Vagina (tissue), 2 donors: ENCODE measurements at regions of chr7 and their contacts with region 1.

Region 1: GRCh38 chr7:69739931-69740431 is 141.7 kb downstream of the AUTS2 start:
- DNase-seq: no peak
- H3K4me3 ChIP-seq: no peak overlapping the region
- H3K27ac ChIP-seq: no peak overlapping the region
- H3K4me1 ChIP-seq: peaks cover 9% of the 10 kb centered on the region
- H3K27me3 ChIP-seq: no peaks in the 10 kb centered on the region
- CTCF ChIP-seq: no peak
- POLR2A ChIP-seq: no peak

Region 2: GRCh38 chr7:68873616-68874015 is 866.4 kb before region 1 on chr7:
- intact Hi-C with region 1: loop called (anchors 10 kb)
- DNase-seq: no peak
- H3K4me3 ChIP-seq: no peak overlapping the region
- H3K27ac ChIP-seq: no peak overlapping the region
- H3K4me1 ChIP-seq: no peaks in the 10 kb centered on the region
- H3K27me3 ChIP-seq: no peaks in the 10 kb centered on the region
- CTCF ChIP-seq: no peak
- POLR2A ChIP-seq: no peak

Region 3: DNA sequence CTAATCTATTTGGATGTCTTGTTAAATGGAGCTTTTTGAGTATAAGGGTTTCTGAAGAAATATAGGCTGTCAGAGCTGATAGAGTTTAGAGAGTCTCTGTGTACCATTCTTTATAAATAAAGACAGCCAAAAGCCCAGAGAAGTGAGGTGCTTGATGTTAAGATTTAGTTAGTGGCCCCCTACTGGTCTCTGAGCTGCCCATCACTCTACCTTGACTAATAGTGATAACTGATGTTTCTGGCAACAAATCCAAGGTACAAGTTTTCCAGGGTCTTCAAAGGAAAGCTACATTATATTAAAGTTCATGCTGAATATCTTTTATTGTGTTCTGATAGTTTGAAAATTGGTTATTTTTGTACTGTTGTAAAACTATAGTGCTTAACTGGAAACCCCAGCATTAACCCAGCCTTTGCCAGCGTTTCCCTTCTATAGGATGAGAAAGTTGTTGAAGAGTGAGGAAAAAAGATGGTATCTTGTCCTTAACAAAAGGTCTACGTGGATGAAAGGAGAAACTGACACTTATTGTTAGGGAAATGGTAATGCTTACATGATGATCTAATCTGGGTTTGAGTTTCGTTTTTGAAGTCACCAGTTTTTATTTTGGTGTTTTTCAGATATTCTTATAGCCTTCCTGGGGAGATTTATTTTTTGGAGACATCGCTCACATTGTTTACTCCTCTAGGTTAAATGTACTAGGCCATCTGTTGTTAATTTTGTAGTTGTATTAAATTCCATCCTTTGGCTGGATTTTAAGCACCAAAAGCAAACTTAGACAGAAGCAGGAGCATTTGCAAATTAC is 62.7 kb before region 1 on chr7:
- intact Hi-C with region 1: no loop called
- DNase-seq: no peak
- H3K4me3 ChIP-seq: no peak overlapping the region
- H3K27ac ChIP-seq: peak overlapping the region; percentile 55
- H3K4me1 ChIP-seq: peaks cover 29% of the 10 kb centered on the region
- H3K27me3 ChIP-seq: no peaks in the 10 kb centered on the region
- CTCF ChIP-seq: peak in 1 of 3 experiments; percentile 12
- POLR2A ChIP-seq: no peak

Region 4: DNA sequence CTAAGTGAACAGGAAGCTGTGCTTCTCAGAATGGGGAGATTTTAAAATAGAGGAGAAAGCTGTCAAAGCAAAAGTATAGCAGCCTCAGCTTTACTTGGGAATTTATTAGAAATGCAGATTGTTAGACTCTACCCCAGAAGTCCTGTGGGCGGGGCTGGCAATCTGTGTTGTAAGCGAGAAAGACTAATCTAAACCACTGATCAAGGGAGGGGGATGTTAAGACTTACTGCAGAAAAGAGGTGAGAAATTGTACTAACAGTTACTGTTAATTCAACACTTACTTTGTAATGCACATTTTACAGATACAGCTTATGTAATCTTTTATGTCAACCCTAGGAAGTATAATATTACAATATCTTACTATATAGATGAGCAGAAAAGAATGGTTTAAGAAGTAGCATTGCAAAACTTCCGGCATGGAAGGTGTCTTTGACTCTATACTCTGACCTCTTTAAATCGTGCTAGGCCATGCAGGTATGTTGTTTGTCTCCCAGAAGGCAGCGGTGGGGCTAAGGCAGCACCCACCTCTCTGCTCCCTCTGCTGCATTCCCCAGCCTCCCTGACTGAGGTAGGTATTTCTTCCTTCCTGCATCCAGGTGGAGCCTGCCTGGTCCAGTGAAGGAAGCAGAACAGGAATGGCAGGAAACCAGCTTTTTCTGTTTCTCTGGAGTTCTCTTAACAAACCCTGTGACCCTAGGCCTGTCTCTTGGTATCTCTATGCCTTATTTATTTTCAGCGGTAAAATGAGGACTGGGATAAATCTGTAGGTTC is 320.5 kb after region 1 on chr7:
- intact Hi-C with region 1: no loop called
- DNase-seq: no peak
- H3K4me3 ChIP-seq: no peak overlapping the region
- H3K27ac ChIP-seq: no peak overlapping the region
- H3K4me1 ChIP-seq: no peaks in the 10 kb centered on the region
- H3K27me3 ChIP-seq: no peaks in the 10 kb centered on the region
- CTCF ChIP-seq: no peak
- POLR2A ChIP-seq: no peak

Region 5: DNA sequence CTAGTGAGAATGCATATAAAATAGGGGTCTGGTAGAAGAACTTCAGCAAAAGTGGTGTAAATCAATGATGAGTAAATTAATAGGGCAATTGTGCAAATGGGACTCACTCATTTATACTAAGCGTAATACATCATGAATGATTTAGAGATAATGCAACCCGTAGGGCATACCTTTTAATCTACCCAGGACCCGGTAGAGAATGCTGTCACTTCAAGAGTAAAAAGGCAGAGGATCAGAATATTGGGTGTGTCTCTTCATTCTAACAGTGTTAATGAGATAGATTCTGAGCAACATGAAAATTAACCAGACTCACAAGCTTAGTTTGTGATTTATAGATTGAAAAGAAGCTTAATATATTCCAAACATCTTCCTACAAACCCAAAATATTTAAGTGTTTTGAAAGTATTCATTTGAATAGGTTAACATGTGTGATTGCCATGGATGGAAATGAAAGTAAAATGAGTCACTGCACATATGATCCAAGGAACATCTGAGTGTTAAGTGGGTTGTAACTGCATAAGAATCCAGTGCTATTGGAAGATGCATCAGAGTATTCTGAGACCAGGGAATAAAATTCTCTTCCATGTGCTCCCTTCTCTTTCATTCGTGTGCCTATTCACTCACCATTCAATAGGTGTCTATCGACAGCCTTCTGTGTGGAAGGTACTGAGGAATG is 548.9 kb after region 1 on chr7:
- intact Hi-C with region 1: no loop called
- DNase-seq: no peak
- H3K4me3 ChIP-seq: no peak overlapping the region
- H3K27ac ChIP-seq: no peak overlapping the region
- H3K4me1 ChIP-seq: no peaks in the 10 kb centered on the region
- H3K27me3 ChIP-seq: no peaks in the 10 kb centered on the region
- CTCF ChIP-seq: no peak
- POLR2A ChIP-seq: no peak